ENCODE measurements at regions of chr16 and their contacts with region 1.

Region 1: DNA sequence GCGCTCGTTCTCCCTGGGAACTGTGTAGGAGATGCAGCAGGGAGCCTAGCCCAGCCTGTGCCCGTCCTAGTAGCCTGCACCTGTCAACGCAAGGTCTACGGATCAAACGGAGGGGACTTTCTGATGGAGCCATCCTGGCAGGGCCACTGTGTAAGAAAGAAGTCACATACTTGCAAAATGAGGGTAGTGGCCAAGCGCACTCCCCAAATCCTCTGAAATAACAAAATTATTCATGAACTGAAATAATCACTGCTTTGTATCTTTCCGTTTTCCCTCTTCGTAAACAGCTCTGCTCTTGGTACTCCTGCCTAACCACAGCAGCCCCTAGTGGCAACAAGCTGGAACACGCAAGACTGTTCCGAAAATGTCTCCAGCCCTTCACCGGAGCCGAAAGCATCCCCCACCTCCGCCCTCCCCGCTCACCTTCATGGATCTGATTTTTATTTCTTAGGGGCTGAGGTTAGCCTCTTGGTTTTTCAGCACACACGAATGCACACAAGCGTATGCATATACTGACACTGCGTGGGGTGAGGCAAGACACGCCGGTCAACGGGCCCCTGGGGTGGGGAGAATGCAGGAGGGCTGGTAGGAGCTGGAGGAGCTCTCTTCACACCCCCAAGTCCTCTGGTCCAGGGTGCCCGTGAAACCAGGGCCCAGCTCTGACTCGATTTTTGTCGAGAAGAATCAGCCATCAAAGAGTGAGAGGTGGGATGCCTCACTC is 100.8 kb downstream of the ABCC12 start:
- DNase-seq: peak; percentile 45 to 94 (median 72)

Region 2: DNA sequence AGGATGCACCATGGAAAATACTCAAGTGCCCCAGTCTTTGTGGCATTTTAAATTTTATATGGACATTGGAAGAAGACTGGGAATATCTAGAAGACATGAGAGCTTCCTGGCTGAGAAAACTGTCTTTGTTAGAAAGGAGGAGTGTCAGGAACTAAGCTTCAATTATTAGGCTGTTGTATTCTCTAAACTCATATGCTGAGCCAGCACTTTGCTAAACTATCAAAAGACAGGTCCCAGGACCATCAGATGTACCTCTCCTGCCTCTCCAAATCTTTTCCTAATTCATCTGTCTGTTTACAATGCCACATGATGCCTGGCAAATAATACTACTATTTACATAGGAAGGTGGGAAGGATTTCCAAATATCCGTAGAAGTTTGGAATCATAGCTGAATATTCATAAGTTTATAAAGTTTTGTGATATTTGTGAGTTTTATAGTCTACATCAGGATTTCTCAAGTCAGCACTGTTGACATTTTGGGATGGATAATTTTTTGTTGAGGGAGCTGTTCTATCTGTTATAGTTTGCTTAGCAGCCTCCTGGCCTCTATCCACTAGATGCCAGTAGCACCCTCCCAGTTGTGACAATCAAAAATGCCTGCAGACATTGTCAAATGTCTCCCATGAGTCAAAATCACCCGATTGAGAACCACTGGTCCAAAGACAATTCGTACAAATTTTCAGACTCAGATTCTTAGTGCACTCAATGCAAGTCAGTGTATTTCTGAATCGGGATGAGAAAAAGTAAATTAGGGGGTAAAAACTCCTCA is 850.1 kb before region 1 on chr16:
- intact Hi-C with region 1: loop called (anchors 5 kb)
- DNase-seq: peak in 2 of 10 donors; percentile 16 to 20

Region 3: GRCh38 chr16:47979164-47979520 is 75.9 kb before region 1 on chr16:
- intact Hi-C with region 1: no loop called
- DNase-seq: no peak

Measured in posterior cingulate gyrus (tissue), 11 donors.